Heart left ventricle (tissue), 16 donors: ENCODE measurements at regions of chr17 and their contacts with region 1.

Region 1: GRCh38 chr17:50931144-50931908 is 65.2 kb upstream of the TOB1 start:
- DNase-seq: peak; percentile 89 to 96 (median 92)
- ATAC-seq: peak; percentile 92 to 95 (median 94)
- H3K4me3 ChIP-seq: peak overlapping the region; percentile 18 to 63 (median 54)
- H3K27ac ChIP-seq: peak overlapping the region; percentile 93 to 100 (median 98)
- H3K4me1 ChIP-seq: peaks cover 0 to 46% (median 23%) of the 10 kb centered on the region in 12 donors
- H3K27me3 ChIP-seq: no peaks in the 10 kb centered on the region
- CTCF ChIP-seq: no peak
- POLR2A ChIP-seq: peak in 1 of 2 donors; percentile 20

Region 2: GRCh38 chr17:50853015-50853615 is 78.2 kb before region 1 on chr17:
- intact Hi-C with region 1: no loop called
- DNase-seq: no peak
- ATAC-seq: peak in 1 of 4 donors; percentile 18
- H3K4me3 ChIP-seq: peak overlapping the region in 1 of 12 donors; percentile 0
- H3K27ac ChIP-seq: peak overlapping the region in 11 of 12 donors; percentile 25 to 93 (median 83)
- H3K4me1 ChIP-seq: peaks cover 0 to 38% (median 15%) of the 10 kb centered on the region in 12 donors
- H3K27me3 ChIP-seq: no peaks in the 10 kb centered on the region
- CTCF ChIP-seq: no peak
- POLR2A ChIP-seq: no peak

Region 3: DNA sequence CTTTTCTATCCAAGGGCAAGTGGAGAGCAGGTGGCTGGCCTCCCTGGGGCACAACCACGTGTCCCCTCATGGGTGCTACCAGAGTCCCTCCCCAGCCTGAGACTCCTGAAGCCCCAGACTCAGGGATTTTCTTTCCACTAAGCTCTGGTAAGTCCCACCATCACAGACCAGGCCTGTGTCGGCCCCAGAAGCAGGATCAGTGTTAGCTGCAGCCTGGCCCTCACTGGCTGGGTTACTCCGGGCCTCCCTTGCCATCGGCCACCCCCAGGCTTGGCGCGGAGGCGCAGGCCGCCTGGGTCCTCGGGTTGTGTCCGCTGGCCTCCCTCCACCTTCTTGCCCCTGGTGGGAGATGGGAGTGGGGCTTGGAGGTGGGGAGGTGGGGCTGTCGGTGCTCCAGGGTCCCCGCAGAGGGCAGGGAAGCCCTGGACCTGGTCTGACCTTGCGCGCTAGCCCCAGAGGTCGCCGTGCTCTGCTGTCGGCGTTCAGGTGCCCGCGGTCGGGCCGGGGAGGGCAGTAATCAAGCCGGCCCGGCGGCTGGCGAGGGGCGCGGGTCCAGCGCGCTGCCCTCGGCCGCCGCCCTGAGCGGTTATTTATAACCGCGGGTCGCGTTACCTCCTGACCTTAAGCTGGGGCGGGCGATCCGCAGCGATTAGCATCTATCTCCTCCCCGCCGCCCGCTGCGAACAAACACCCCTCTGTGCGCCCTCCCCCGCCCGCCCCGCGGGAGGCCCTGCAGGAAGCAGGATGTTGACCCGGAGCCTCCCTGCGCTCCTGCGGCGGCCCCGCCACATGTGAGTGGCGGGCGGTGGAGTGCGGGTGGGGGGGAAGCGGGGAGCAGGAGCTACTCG is 13.0 kb after region 1 on chr17:
- intact Hi-C with region 1: loop called in 1 of 10 experiments (anchors 1 kb)
- DNase-seq: peak; percentile 90 to 92 (median 90)
- ATAC-seq: peak; percentile 38 to 88 (median 81)
- H3K4me3 ChIP-seq: peak overlapping the region; percentile 18 to 72 (median 65)
- H3K27ac ChIP-seq: peak overlapping the region; percentile 86 to 100 (median 96)
- H3K4me1 ChIP-seq: peaks cover 4 to 49% (median 31%) of the 10 kb centered on the region in 12 donors
- H3K27me3 ChIP-seq: no peaks in the 10 kb centered on the region
- CTCF ChIP-seq: peak in 1 of 12 donors; percentile 25
- POLR2A ChIP-seq: peak in 1 of 2 donors; percentile 69